Dendritic cell treated with granulocyte-macrophage colony-stimulating factor and Interleukin-4, amounts not matched to agents 40 ng/mL and 50 ng/mL, for 4 days (primary cell): ENCODE measurements at regions of chr14 and their contacts with region 1.

Region 1: DNA sequence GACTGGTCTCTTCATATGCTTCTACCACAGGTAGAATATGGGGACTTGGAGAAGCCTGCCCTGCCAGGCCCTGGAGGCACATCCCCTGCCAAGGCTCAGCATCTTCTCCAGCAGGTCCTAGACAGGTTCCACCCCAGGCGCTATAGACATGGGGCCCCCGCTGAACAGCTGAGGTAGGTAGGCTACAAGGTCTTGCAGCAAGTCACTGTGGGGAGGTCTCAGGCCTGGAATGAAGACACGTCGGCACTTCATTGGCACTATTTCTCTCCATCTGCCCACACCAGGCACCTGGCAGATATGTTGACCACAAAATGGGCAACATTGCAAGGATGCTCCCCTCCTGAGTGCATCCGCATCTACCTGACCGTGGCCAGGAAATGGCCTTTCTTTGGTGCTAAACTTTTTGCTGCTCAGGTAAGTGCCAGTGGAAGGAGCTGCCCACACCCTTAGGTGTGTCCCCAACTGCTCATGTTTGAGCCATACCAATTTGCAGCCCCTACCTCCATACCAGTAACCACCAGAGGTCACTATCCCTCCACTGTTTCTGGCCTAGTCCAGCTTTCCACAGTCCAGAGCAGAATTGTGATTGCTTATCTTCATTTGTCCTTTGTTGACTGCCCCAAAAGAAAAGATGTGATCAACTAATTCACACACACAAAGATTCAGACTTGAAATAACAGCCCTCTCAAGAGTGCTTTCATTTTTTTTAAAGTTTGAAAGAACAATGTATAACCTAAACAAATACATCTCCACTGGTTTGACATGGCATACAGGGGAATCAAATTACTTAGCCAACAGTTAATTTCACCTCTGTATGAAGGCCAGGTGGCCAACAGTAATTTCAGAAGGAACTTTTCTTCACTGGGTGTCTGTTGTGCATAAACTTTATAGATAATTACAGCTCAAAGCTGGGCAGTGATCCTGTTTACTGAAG is 16.1 kb downstream of the PIGH start:
- H3K4me3 Mint-ChIP-seq: no peak overlapping the region
- H3K27ac Mint-ChIP-seq: no peak overlapping the region
- H3K4me1 Mint-ChIP-seq: peaks cover 36% of the 10 kb centered on the region
- H3K27me3 Mint-ChIP-seq: peaks cover 4% of the 10 kb centered on the region

Region 2: DNA sequence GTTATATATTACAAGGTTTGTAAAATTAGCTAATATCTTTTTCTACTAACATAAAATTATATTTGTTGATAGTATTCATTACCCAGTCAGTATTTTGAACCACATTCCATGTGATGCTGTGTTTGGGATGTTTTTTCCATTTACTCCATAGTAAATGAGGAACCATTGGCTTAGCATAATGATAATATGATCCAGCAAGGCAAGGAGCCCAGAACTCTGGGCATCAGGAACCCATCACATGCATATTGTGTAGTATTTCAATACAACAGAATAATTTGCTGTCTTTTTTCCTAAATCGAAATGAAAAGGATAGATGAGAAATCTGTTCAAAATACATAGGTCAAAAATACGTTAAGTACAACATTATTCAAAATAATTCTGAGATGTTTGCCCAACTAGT is 443.4 kb before region 1 on chr14:
- intact Hi-C with region 1: no loop called
- H3K4me3 Mint-ChIP-seq: no peak overlapping the region
- H3K27ac Mint-ChIP-seq: no peak overlapping the region
- H3K4me1 Mint-ChIP-seq: no peaks in the 10 kb centered on the region
- H3K27me3 Mint-ChIP-seq: no peaks in the 10 kb centered on the region

Region 3: DNA sequence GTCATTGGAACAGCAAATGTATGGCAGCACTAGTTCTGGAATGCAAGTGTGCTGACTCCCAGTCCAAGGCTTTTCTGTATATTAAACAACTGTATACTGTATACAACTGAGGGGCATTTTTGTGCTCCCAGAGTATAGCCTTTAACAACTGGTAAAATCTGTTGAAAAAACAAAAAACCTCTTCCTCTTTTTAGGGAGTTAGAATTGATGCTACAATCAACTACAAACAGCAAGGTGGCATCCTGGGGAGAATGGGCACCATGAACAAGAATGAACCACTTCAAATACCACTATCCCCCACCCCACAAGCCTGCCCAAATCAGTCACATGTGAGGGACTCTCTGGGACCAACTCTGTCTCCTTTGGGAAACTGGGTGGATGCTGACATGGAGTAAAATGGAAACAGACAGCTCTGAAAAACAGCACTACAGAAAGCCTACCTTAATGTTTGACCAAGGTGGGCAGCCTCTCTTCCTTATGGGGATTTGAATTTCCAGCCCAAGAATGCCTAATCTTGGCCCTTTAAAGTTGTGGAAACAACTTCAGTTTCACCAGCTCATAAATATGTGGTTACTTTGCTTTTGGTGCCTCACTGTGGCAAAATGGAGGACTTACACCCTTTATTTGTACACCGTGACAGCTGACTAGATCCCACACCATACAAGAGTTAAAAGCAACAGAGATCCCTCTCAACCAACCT is 82.9 kb after region 1 on chr14:
- intact Hi-C with region 1: loop called (anchors 1 kb)
- H3K4me3 Mint-ChIP-seq: no peak overlapping the region
- H3K27ac Mint-ChIP-seq: peak overlapping the region; percentile 30
- H3K4me1 Mint-ChIP-seq: peaks cover 77% of the 10 kb centered on the region
- H3K27me3 Mint-ChIP-seq: no peaks in the 10 kb centered on the region